ENCODE measurements at regions of chr6 and their contacts with region 1.

Region 1: DNA sequence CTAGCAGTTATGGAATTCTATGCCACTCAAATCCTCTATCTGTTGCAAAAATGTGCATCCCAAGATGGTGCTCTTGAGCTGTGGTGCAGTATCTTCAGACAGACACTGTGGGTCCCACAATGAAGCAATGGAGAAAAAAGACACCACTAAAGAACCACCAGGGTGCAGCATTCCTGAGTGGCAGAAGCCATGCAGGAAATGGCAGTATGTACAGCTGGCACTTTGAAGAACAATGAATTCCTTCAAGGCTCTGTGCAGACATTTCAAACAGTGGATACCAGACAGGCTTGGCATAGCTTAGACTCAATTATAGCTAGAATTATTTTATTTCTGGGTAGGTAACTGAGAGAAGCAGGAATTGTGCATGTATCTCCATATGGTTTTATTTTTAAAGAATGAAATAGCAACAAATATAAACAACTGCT is 24.0 kb upstream of the HDAC2 start:
- DNase-seq: peak; percentile 50
- ATAC-seq: peak; percentile 90
- H3K4me3 Mint-ChIP-seq: no peak overlapping the region
- H3K27ac Mint-ChIP-seq: no peak overlapping the region
- H3K4me1 Mint-ChIP-seq: peaks cover 19% of the 10 kb centered on the region
- H3K27me3 Mint-ChIP-seq: no peaks in the 10 kb centered on the region
- CTCF ChIP-seq: peak; percentile 43

Region 2: DNA sequence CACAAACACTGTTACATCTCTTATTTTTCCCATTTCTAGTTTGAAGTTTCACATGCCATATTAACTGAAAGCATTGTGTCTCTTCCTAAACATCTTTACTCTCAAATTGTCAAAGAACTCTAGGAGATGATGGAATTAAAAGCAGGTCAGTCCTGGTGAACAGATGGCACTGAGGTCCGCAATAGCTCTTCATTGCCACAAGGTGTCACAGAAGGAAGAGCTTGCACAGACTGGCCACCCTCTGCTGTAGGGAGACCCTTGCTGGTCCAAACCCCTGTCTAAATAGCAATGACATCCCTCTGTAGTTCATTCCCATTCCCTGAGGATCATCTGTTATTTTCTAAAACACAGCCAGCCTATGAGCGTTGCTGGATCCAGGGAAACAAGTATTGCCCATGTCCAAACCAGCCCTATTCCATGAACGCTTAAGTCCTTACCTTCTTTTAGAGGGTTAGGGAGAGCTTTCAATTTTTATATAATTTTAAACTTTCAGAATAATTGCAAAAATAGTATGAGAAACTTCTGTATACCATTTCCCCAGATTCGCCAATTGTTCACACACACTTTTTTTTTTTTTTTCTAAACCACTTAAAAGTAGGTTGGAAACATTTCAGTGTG is 13.9 kb before region 1 on chr6:
- CTCF ChIA-PET with region 1: interaction called, 14 read pairs
- POLR2A ChIA-PET with region 1: no interaction called
- DNase-seq: peak; percentile 60
- ATAC-seq: peak; percentile 100
- H3K4me3 Mint-ChIP-seq: no peak overlapping the region
- H3K27ac Mint-ChIP-seq: no peak overlapping the region
- H3K4me1 Mint-ChIP-seq: no peaks in the 10 kb centered on the region; the same call in 1 of the 2 replicates
- H3K27me3 Mint-ChIP-seq: no peaks in the 10 kb centered on the region
- CTCF ChIP-seq: peak; percentile 63

Region 3: DNA sequence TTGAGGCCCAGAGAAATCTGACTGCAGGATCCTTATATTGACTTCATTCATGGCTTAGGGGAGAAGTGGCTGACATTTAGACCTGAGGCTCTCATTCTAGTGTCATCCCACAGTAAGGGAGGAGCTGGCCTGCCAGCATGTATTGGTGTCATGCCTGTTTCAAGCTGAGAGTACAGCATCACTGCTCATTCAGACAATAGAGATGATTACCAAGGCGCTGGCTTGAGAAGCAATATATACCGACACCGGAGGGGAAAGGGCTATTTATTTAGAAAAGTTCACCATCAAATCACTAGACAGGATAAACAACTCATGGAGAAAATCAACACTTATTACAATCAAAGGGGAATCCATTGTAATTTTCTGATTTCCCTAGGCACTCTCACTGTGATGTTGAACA is 60.4 kb after region 1 on chr6:
- CTCF ChIA-PET with region 1: interaction called, 12 read pairs
- POLR2A ChIA-PET with region 1: no interaction called
- DNase-seq: no peak
- ATAC-seq: peak; percentile 44; the same call in 1 of the 2 replicates
- H3K4me3 Mint-ChIP-seq: no peak overlapping the region
- H3K27ac Mint-ChIP-seq: peak overlapping the region; percentile 43; the same call in 1 of the 2 replicates
- H3K4me1 Mint-ChIP-seq: peaks cover 25% of the 10 kb centered on the region
- H3K27me3 Mint-ChIP-seq: no peaks in the 10 kb centered on the region
- CTCF ChIP-seq: no peak

Region 4: DNA sequence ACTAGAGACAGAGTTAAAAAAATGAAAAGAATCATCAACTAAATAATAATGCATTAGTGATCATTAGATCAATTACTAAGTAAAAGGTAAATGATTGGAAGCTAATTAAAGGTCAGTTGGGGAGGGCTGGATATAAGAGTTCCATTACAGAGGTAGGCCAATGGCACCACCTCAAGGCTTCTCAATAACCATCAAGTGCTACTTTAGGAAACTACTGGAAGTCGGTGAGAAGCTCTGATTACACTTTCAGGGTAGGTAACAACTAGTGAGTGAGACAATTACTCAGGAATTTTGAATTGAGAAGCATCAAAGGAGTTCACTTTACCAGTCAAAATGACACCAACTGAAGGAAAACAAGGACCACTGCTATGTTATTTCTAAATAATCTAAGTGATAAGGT is 66.2 kb after region 1 on chr6:
- CTCF ChIA-PET with region 1: interaction called, 13 read pairs
- POLR2A ChIA-PET with region 1: no interaction called
- DNase-seq: no peak
- ATAC-seq: peak; percentile 65
- H3K4me3 Mint-ChIP-seq: no peak overlapping the region
- H3K27ac Mint-ChIP-seq: 0 out of 2 replicates have a peak overlapping the region, but pooled peaks have one; percentile 18
- H3K4me1 Mint-ChIP-seq: peaks cover 12% of the 10 kb centered on the region
- H3K27me3 Mint-ChIP-seq: no peaks in the 10 kb centered on the region
- CTCF ChIP-seq: no peak

Region 5: DNA sequence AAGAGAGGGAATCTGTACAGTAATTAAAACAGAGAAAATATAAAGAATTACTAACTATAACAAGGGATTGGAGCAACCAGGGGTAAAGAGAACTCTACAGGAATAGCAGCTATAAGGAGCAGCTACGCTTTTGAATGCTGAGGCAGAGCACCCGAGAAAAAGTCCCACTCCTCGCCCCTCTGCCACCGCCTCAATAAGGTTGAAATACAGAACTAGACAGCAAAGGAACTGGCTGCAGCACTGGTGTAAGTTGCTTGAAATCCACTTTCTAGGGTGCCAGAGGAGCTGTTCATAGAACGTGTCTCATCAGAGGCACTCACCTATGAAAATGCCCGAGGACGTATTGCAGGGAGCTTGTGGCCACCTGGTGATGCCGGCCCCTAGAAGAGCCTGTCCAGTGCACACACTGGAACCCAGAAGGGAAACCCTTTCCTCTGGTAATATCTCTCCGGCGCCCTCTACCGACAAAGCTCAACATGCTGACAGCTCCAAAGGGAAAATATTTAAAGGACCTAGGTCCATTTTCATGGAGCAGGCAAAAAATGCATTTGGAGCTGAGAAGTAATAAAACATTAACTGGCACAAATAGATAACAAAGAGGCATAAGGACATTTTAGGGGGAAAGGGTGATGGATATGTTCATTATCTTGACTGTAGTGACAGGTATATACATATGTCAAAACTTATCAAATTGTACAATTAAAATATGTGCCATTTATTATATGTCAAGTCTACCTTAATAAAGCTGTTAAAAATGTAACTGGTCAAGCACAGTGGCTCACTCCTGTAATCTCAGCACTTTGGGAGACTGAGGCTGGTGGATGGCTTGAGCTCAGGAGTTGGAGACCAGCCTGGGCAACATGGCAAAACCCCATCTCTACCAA is 113.4 kb after region 1 on chr6:
- CTCF ChIA-PET with region 1: interaction called, 47 read pairs
- POLR2A ChIA-PET with region 1: no interaction called
- DNase-seq: peak; percentile 89
- ATAC-seq: peak; percentile 96
- H3K4me3 Mint-ChIP-seq: no peak overlapping the region
- H3K27ac Mint-ChIP-seq: no peak overlapping the region
- H3K4me1 Mint-ChIP-seq: peaks cover 4% of the 10 kb centered on the region; the same call in 1 of the 2 replicates
- H3K27me3 Mint-ChIP-seq: no peaks in the 10 kb centered on the region
- CTCF ChIP-seq: peak; percentile 76

Region 6: GRCh38 chr6:114342826-114343780 is 348.2 kb after region 1 on chr6 and contains the start of gene HS3ST5:
- CTCF ChIA-PET with region 1: interaction called, 12 read pairs
- POLR2A ChIA-PET with region 1: no interaction called
- DNase-seq: peak; percentile 91
- ATAC-seq: peak; percentile 79
- H3K4me3 Mint-ChIP-seq: peak within 1 kb of the TSS; percentile 98
- H3K27ac Mint-ChIP-seq: peak within 1 kb of the TSS; percentile 81
- H3K4me1 Mint-ChIP-seq: peaks cover 43% of the 10 kb centered on the region
- H3K27me3 Mint-ChIP-seq: no peaks in the 10 kb centered on the region
- CTCF ChIP-seq: peak; percentile 43
- total RNA-seq, gene HS3ST5: 8.1 to 8.7 TPM (median 8.6 TPM) in 3 replicates

Measured in WTC11 (cell line).